H1 (cell line): ENCODE measurements at regions of chr20 and their contacts with region 1.

Region 1: DNA sequence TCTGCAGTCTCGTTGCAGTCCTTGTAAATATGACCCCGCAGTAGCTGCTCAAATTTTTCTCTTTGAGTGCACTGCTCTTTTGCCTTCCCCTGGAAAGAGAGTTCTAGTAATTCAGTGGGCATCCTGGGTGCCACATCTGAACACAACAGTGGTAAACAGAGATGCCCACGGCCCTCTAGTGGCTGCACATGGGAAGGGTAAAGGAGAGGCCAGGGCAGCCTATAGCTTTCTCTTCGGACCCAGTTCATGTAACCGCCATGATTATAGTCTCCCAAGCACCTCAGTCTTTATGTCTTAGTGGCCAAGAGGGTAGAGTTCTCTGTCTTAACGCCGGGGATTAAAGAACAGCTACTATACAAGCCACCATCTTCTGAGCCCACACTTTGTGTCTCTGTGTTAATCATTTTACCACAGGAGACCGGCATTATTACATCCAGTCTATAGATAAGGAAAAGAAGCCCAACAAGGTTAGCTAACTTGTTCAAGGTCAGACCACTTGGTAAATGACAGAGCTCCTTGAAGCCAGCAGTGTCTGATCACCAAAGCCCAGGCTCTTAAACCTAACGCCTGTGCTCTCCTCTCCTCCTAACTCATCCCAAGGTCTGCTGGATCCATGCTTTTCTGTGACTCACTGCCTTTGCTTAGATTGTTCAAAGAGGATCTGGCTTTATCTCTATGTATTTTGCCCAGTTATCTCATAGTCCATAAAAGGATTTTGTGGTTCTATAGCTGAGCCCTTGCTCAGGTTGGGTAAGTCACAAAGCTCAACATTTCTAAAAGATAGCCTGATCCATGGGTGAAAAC is 81.8 kb downstream of the ISM1 start:
- DNase-seq: peak in 1 of 2 experiments; percentile 67
- H3K4me3 ChIP-seq: no peak overlapping the region
- H3K27ac ChIP-seq: no peak overlapping the region
- H3K4me1 ChIP-seq: no peaks in the 10 kb centered on the region
- H3K27me3 ChIP-seq: no peaks in the 10 kb centered on the region
- CTCF ChIP-seq: peak; percentile 66 to 77 (median 74)
- EP300 ChIP-seq: no peak
- POLR2A ChIP-seq: no peak
- RAD21 ChIP-seq: peak; percentile 67 to 70

Region 2: DNA sequence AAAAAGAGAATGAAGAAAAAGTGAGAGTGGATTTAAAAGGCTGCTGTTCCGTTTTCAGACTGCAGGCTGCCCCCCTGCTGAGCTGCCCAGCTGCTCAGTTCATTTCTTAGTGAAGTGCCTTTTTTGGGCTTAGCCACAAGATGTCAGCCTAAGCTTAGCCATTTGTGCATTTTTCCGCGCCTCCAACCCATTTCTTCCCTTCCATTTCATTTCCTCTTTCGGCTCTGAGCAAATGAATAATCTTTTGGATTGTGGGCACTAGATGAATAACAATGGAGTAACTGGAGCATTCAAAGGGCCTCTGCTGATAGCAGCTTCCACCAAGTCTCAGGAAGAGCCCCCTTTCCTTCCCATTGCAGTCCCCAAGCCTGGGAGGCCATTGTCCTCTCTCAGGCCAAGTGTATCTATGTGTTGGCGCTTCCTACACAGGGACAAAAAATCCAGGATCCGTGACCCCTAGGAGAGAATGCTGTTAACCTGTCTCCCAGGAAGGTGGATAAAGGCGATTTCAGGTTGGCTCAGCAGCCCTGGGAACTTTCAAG is 377.6 kb before region 1 on chr20:
- CTCF ChIA-PET with region 1: interaction called, 13 read pairs
- POLR2A ChIA-PET with region 1: no interaction called
- DNase-seq: peak in 1 of 2 experiments; percentile 67
- H3K4me3 ChIP-seq: no peak overlapping the region
- H3K27ac ChIP-seq: no peak overlapping the region
- H3K4me1 ChIP-seq: peaks cover 2 to 8% (median 5%) of the 10 kb centered on the region in 4 experiments; a peak in 4 of 7 replicates
- H3K27me3 ChIP-seq: peaks cover 0 to 2% (median 0%) of the 10 kb centered on the region in 4 experiments; a peak in 2 of 7 replicates
- CTCF ChIP-seq: peak; percentile 50 to 96 (median 79)
- EP300 ChIP-seq: no peak
- POLR2A ChIP-seq: no peak
- RAD21 ChIP-seq: peak; percentile 92 to 94

Region 3: GRCh38 chr20:13261460-13262301 is 41.2 kb before region 1 on chr20:
- CTCF ChIA-PET with region 1: interaction called, 20 read pairs
- POLR2A ChIA-PET with region 1: no interaction called
- DNase-seq: peak; percentile 34 to 86
- H3K4me3 ChIP-seq: no peak overlapping the region
- H3K27ac ChIP-seq: no peak overlapping the region
- H3K4me1 ChIP-seq: peaks cover 0 to 2% (median 0%) of the 10 kb centered on the region in 4 experiments; a peak in 1 of 7 replicates
- H3K27me3 ChIP-seq: no peaks in the 10 kb centered on the region
- CTCF ChIP-seq: peak; percentile 86 to 93 (median 87)
- EP300 ChIP-seq: no peak
- POLR2A ChIP-seq: no peak
- RAD21 ChIP-seq: peak; percentile 68 to 82

Region 4: GRCh38 chr20:13286607-13287006 is 16.2 kb before region 1 on chr20:
- CTCF ChIA-PET with region 1: interaction called, 20 read pairs
- POLR2A ChIA-PET with region 1: no interaction called
- DNase-seq: no peak
- H3K4me3 ChIP-seq: no peak overlapping the region
- H3K27ac ChIP-seq: no peak overlapping the region
- H3K4me1 ChIP-seq: peaks cover 0 to 2% (median 0%) of the 10 kb centered on the region in 4 experiments; a peak in 1 of 7 replicates
- H3K27me3 ChIP-seq: no peaks in the 10 kb centered on the region
- CTCF ChIP-seq: no peak
- EP300 ChIP-seq: no peak
- POLR2A ChIP-seq: no peak
- RAD21 ChIP-seq: no peak

Region 5: GRCh38 chr20:13325033-13325432 is 22.2 kb after region 1 on chr20:
- CTCF ChIA-PET with region 1: interaction called, 24 read pairs
- POLR2A ChIA-PET with region 1: no interaction called
- DNase-seq: peak; percentile 46 to 74
- H3K4me3 ChIP-seq: no peak overlapping the region
- H3K27ac ChIP-seq: no peak overlapping the region
- H3K4me1 ChIP-seq: peaks cover 0 to 5% (median 0%) of the 10 kb centered on the region in 4 experiments; a peak in 1 of 7 replicates
- H3K27me3 ChIP-seq: peaks cover 0 to 1% (median 0%) of the 10 kb centered on the region in 4 experiments; a peak in 1 of 7 replicates
- CTCF ChIP-seq: peak; percentile 81 to 85 (median 81)
- EP300 ChIP-seq: no peak
- POLR2A ChIP-seq: no peak
- RAD21 ChIP-seq: peak; percentile 89 to 92